ENCODE measurements at regions of chrX and their contacts with region 1.

Region 1: GRCh38 chrX:12245650-12246645 is 107.7 kb downstream of the FRMPD4 start:
- DNase-seq: no peak
- CTCF ChIP-seq: no peak

Region 2: DNA sequence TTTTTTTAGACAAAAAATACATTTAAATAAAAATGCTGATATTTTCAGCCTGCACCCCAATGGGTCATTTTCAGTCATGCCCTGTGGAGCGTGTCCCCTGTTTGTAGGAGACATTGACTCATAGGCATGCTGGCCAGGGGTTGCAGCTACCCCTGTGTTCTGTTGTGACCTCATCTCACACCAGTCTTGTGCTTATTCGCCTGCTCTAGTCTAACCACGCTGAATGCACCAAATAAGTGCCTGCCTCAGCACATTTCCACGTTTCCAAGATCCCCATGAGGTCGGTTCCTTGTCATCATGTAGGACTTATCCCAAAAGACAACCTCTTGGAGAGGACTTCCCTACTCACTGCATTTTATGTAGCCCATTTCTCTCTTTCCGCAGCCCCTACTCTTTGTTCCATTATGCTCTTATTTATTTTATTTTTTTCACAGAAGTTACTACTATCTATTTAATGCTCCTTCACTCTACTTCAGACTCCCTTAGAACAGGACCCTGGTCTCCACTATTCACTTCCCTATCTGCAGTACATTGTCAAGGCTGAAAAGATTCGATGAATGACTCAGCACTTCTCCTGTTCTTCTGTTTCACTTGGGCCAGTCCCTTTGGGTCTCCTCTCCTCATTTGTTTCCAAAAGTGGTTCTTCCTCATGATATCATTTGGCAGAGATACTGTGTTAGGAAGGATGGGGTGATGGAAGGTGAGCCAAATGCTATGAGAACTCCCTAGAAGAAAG is 378.2 kb before region 1 on chrX:
- in situ Hi-C with region 1: no loop called
- DNase-seq: peak; percentile 3
- CTCF ChIP-seq: no peak

Region 3: GRCh38 chrX:12304261-12304660 is 58.3 kb after region 1 on chrX:
- in situ Hi-C with region 1: loop called (anchors 10 kb)
- DNase-seq: no peak
- CTCF ChIP-seq: no peak

Region 4: GRCh38 chrX:12709047-12709446 is 463.1 kb after region 1 on chrX:
- in situ Hi-C with region 1: no loop called
- DNase-seq: no peak
- CTCF ChIP-seq: no peak